SK-N-SH (cell line): ENCODE measurements at regions of chr3 and their contacts with region 1.

Region 1: DNA sequence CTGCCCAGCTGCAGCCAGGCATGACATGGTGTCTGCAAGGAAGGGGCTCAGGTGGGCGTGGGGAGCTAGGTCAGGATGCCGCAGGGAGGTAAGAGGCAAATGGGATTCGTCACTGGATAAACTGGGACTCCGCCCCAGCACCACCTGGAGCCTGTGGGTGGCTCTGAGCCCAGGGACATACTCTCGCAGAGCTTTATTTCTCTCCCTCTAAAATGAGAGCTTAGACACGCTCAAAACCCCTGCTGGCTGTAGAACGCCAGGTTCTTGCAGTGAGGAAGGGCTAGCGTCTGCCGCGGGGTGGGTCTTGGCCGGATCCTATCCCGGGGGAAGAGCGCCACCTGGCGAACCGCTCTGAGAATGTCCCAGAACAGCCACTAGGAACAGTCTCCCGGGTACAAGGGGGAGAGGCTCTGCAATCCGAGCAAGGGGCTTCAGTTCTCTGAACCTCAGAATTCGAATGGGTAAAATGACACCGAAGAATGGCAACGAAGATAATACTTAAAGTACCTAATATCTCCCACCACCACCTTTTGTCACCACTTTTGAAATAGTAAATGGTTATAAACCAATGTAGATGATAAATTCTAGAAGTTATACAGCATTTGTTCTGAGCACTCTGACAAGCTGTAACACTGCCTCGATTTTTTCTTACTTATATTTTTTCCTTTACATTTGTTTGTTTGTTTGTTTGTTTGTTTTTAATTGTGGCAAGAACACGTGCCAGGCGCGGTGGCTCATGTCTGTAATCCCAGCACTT is 53.2 kb upstream of the SRGAP3 start:
- DNase-seq: peak; percentile 88
- H3K4me3 ChIP-seq: peak overlapping the region; percentile 13 to 56; a peak in 2 of 4 replicates
- H3K27ac ChIP-seq: no peak overlapping the region
- H3K4me1 ChIP-seq: peaks cover 0 to 4% of the 10 kb centered on the region in 2 experiments; a peak in 1 of 4 replicates
- H3K27me3 ChIP-seq: no peaks in the 10 kb centered on the region
- CTCF ChIP-seq: peak; percentile 93
- EP300 ChIP-seq: no peak
- RAD21 ChIP-seq: peak; percentile 99

Region 2: GRCh38 chr3:8970971-8971589 is 331.5 kb before region 1 on chr3:
- CTCF ChIA-PET with region 1: interaction called, 71 read pairs
- POLR2A ChIA-PET with region 1: no interaction called
- DNase-seq: peak; percentile 69
- H3K4me3 ChIP-seq: peak overlapping the region in 1 of 2 experiments; percentile 13; a peak in 1 of 4 replicates
- H3K27ac ChIP-seq: no peak overlapping the region
- H3K4me1 ChIP-seq: peaks cover 0 to 4% of the 10 kb centered on the region in 2 experiments; a peak in 1 of 4 replicates
- H3K27me3 ChIP-seq: no peaks in the 10 kb centered on the region
- CTCF ChIP-seq: peak; percentile 98
- EP300 ChIP-seq: no peak
- RAD21 ChIP-seq: peak; percentile 97

Region 3: GRCh38 chr3:8996681-8997121 is 305.9 kb before region 1 on chr3:
- CTCF ChIA-PET with region 1: interaction called, 42 read pairs
- POLR2A ChIA-PET with region 1: no interaction called
- DNase-seq: no peak
- H3K4me3 ChIP-seq: no peak overlapping the region
- H3K27ac ChIP-seq: no peak overlapping the region
- H3K4me1 ChIP-seq: no peaks in the 10 kb centered on the region
- H3K27me3 ChIP-seq: no peaks in the 10 kb centered on the region
- CTCF ChIP-seq: no peak; the same call in 1 of the 2 replicates
- EP300 ChIP-seq: no peak
- RAD21 ChIP-seq: peak; percentile 29; the same call in 1 of the 2 replicates

Region 4: GRCh38 chr3:9067352-9067975 is 235.1 kb before region 1 on chr3:
- CTCF ChIA-PET with region 1: interaction called, 30 read pairs
- POLR2A ChIA-PET with region 1: no interaction called
- DNase-seq: peak; percentile 69
- H3K4me3 ChIP-seq: peak overlapping the region in 1 of 2 experiments; percentile 26; a peak in 1 of 4 replicates
- H3K27ac ChIP-seq: no peak overlapping the region
- H3K4me1 ChIP-seq: no peaks in the 10 kb centered on the region; a peak in 1 of 4 replicates
- H3K27me3 ChIP-seq: no peaks in the 10 kb centered on the region
- CTCF ChIP-seq: peak; percentile 91
- EP300 ChIP-seq: no peak
- RAD21 ChIP-seq: peak; percentile 98

Region 5: GRCh38 chr3:9231006-9231405 is 71.6 kb before region 1 on chr3:
- CTCF ChIA-PET with region 1: interaction called, 10 read pairs
- POLR2A ChIA-PET with region 1: no interaction called
- DNase-seq: no peak
- H3K4me3 ChIP-seq: no peak overlapping the region
- H3K27ac ChIP-seq: no peak overlapping the region
- H3K4me1 ChIP-seq: peaks cover 0 to 16% of the 10 kb centered on the region in 2 experiments; a peak in 2 of 4 replicates
- H3K27me3 ChIP-seq: no peaks in the 10 kb centered on the region
- CTCF ChIP-seq: no peak
- EP300 ChIP-seq: no peak
- RAD21 ChIP-seq: no peak

Region 6: DNA sequence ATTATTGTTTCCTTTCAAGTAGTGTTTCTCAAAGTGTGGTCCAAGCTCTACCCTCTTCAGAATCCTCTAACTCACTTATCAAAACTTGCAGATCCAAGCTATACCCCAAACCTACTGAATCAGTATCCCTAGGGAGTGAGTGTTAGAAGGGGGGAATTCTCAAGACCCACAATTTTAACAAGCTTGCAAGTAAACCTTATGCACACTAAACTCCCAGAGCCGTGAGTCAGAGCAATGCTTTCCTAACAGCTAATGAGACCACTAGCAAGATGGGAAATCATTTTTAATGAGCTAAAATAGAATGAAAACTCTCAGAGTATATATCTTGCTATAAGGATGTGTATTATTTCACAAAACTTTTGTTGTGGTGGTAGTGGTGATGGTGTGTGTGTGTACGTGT is 12.0 kb before region 1 on chr3:
- CTCF ChIA-PET with region 1: interaction called, 15 read pairs
- POLR2A ChIA-PET with region 1: no interaction called
- DNase-seq: no peak
- H3K4me3 ChIP-seq: no peak overlapping the region
- H3K27ac ChIP-seq: no peak overlapping the region
- H3K4me1 ChIP-seq: no peaks in the 10 kb centered on the region; a peak in 2 of 4 replicates
- H3K27me3 ChIP-seq: no peaks in the 10 kb centered on the region
- CTCF ChIP-seq: no peak
- EP300 ChIP-seq: no peak
- RAD21 ChIP-seq: no peak

Region 7: GRCh38 chr3:9439331-9439730 is 136.7 kb after region 1 on chr3:
- CTCF ChIA-PET with region 1: no interaction called
- POLR2A ChIA-PET with region 1: no interaction called
- DNase-seq: no peak
- H3K4me3 ChIP-seq: no peak overlapping the region
- H3K27ac ChIP-seq: peak overlapping the region in 1 of 2 experiments; percentile 7; a peak in 1 of 4 replicates
- H3K4me1 ChIP-seq: peaks cover 0 to 7% of the 10 kb centered on the region in 2 experiments; a peak in 2 of 4 replicates
- H3K27me3 ChIP-seq: no peaks in the 10 kb centered on the region
- CTCF ChIP-seq: no peak
- EP300 ChIP-seq: no peak
- RAD21 ChIP-seq: no peak